Activated T-helper 1 cell treated with anti-CD3 and anti-CD28 coated beads, Interleukin-12 subunit alpha, Interleukin-12 subunit beta, Interleukin-2, Interleukin-4 antibody, amounts not matched to agents 30 ng/mL and 10 ng/mL and 1 ng/mL, durations not matched to agents 14 hours and 24 hours and 36 hours (primary cell): ENCODE measurements at regions of chr3 and their contacts with region 1.

Region 1: DNA sequence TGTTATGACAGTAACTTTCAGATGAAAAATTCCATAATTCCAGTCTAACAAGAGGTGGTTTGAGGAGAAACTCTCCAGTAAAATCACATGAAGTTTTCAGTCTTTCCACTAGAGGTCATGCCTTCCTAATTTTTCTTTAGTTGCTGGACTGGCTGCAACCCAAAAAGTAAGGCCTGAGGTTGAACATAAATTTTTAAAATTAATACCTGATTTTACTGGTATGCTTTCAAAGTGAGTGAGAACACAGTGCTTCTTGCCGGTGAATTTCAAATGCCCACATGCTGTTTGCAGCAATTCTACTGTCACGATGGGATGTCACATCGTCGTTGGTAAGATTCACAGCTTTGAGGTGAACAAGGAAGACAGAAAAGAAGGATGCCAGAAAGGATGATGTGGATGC is 89.0 kb upstream of the FGF12 start:
- DNase-seq: no peak
- H3K4me3 Mint-ChIP-seq: peak overlapping the region; percentile 23
- H3K27ac Mint-ChIP-seq: peak overlapping the region; percentile 54
- H3K4me1 Mint-ChIP-seq: peaks cover 82% of the 10 kb centered on the region
- H3K27me3 Mint-ChIP-seq: peaks cover 2% of the 10 kb centered on the region

Region 2: GRCh38 chr3:192675958-192676649 is 140.2 kb before region 1 on chr3:
- intact Hi-C with region 1: loop called (anchors 5 kb)
- DNase-seq: no peak
- H3K4me3 Mint-ChIP-seq: no peak overlapping the region
- H3K27ac Mint-ChIP-seq: peak overlapping the region; percentile 97
- H3K4me1 Mint-ChIP-seq: peaks cover 12% of the 10 kb centered on the region
- H3K27me3 Mint-ChIP-seq: peaks cover 12% of the 10 kb centered on the region

Region 3: DNA sequence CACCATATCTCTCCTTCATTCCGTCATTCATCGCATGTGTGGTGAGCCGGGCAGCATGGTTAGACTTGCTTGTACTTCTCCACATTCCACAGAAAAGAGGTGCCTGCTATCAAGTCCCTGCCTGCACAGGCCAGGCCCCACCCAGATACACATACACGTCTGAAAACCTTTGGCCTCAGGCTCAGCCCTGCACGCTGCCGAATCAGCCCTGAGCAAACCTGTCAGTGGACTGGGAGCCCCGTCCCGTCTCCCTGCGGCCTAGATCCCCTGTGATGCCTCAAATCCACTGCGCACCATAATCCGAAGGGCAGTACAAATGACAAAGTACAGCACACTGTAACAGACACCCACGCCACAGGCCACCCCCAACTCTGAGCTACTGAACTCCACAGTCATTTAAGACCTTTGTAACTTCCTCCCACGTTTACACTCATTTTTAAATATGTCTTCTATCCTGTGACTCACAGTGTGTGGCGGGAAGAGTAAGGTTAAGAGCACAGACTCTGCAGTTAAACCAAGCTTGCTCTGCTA is 34.2 kb after region 1 on chr3:
- intact Hi-C with region 1: loop called (anchors 1 kb)
- DNase-seq: peak; percentile 46
- H3K4me3 Mint-ChIP-seq: peak overlapping the region; percentile 53
- H3K27ac Mint-ChIP-seq: peak overlapping the region; percentile 83
- H3K4me1 Mint-ChIP-seq: peaks cover 73% of the 10 kb centered on the region
- H3K27me3 Mint-ChIP-seq: no peaks in the 10 kb centered on the region

Region 4: GRCh38 chr3:193040836-193041672 is 224.7 kb after region 1 on chr3:
- intact Hi-C with region 1: loop called (anchors 1 kb)
- DNase-seq: no peak
- H3K4me3 Mint-ChIP-seq: no peak overlapping the region
- H3K27ac Mint-ChIP-seq: no peak overlapping the region
- H3K4me1 Mint-ChIP-seq: peaks cover 10% of the 10 kb centered on the region
- H3K27me3 Mint-ChIP-seq: peaks cover 8% of the 10 kb centered on the region

Region 5: GRCh38 chr3:193367868-193368267 is 551.5 kb after region 1 on chr3:
- intact Hi-C with region 1: no loop called
- DNase-seq: no peak
- H3K4me3 Mint-ChIP-seq: no peak overlapping the region
- H3K27ac Mint-ChIP-seq: no peak overlapping the region
- H3K4me1 Mint-ChIP-seq: peaks cover 6% of the 10 kb centered on the region
- H3K27me3 Mint-ChIP-seq: peaks cover 5% of the 10 kb centered on the region

Region 6: DNA sequence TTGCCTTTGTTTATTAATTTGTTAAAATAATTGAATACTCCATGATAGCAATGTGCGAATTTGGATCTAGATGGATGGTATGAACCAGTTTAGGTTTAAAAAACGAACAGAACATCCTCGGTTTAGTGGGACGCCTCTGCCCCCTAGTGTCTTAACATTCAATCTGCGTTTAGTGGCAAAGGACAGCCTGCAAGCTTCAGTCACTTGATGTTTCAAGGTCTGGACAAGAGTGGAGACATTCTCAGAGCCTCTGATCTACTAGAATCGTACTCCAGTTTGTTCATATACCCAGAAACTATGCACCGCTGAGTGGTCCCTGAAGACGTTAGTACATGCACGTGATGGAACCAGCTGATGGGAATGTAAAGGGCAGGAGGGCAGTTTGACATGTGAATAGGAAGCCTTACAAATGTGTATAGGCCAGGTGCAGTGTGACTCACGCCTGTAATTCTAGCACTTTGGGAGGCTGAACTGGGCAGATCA is 756.1 kb after region 1 on chr3:
- intact Hi-C with region 1: loop called (anchors 2 kb)
- DNase-seq: peak; percentile 26
- H3K4me3 Mint-ChIP-seq: no peak overlapping the region
- H3K27ac Mint-ChIP-seq: no peak overlapping the region
- H3K4me1 Mint-ChIP-seq: peaks cover 4% of the 10 kb centered on the region
- H3K27me3 Mint-ChIP-seq: peaks cover 6% of the 10 kb centered on the region